AG04450 (cell line): ENCODE measurements at regions of chr14 and their contacts with region 1.

Region 1: DNA sequence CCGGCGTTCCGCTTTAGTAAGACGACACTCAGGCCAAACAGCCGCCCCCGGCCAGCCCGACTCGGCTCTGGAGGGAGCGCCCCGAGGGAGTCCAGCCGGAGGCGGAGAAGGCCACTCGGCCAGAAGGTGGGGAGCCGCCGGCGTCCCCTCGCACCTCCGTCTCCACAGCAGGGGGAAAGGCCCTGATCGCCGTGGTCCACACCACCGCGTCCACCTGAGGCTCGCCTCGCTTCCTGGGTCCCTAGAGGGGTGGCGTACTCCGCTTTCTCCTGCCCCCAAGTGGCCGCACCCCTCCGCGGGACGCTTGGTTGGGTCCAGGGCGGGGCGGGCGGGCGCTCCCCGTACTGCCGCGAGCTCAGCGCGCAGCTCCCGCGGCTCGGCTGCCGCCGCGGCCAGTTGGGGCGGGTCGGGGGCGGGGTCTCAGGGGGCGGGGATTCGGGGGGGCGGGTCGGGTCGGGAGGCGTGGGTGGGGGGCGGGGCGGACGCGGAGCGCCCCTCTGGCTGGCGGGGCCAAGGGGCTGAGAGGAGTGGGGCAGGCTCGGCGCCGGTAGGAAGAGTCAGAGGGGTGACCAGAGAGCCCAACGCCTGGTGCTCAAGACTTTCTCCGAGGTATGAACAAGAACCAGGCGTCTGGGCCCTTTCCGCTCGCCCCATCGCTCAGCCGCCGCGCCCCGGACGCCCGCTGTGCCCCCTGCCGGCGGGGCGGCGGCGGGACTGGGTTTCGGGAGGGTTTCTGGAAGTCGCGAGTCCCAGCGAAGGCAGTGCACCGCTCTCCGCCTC is at the start of gene FRMD6:
- DNase-seq: peak; percentile 70
- H3K4me3 ChIP-seq: peak within 1 kb of the TSS; percentile 96
- H3K27ac ChIP-seq: peak within 1 kb of the TSS; percentile 97
- H3K27me3 ChIP-seq: no peaks in the 10 kb centered on the region
- CTCF ChIP-seq: peak; percentile 72
- polyA plus RNA-seq, gene FRMD6: 183 and 221 TPM in 2 replicates

Region 2: GRCh38 chr14:51488569-51489220 is 162.9 kb before region 1 on chr14:
- CTCF ChIA-PET with region 1: no interaction called
- POLR2A ChIA-PET with region 1: interaction called, 10 read pairs
- DNase-seq: no peak
- H3K4me3 ChIP-seq: no peak overlapping the region
- H3K27ac ChIP-seq: no peak overlapping the region
- H3K27me3 ChIP-seq: no peaks in the 10 kb centered on the region
- CTCF ChIP-seq: no peak

Region 3: GRCh38 chr14:51554953-51555352 is 96.6 kb before region 1 on chr14:
- CTCF ChIA-PET with region 1: interaction called, 3 read pairs
- POLR2A ChIA-PET with region 1: interaction called, 10 read pairs
- DNase-seq: no peak
- H3K4me3 ChIP-seq: no peak overlapping the region
- H3K27ac ChIP-seq: peak overlapping the region; percentile 71
- H3K27me3 ChIP-seq: no peaks in the 10 kb centered on the region
- CTCF ChIP-seq: peak; percentile 32

Region 4: GRCh38 chr14:51638071-51638944 is 13.3 kb before region 1 on chr14:
- CTCF ChIA-PET with region 1: interaction called, 16 read pairs
- POLR2A ChIA-PET with region 1: no interaction called
- DNase-seq: no peak
- H3K4me3 ChIP-seq: no peak overlapping the region
- H3K27ac ChIP-seq: no peak overlapping the region
- H3K27me3 ChIP-seq: no peaks in the 10 kb centered on the region
- CTCF ChIP-seq: no peak